Calu3 (cell line): ENCODE measurements at regions of chr3 and their contacts with region 1.

Region 1: GRCh38 chr3:155270485-155271342 is 22.8 kb downstream of the STRIT1 start:
- DNase-seq: peak; percentile 50
- H3K4me3 Mint-ChIP-seq: peak overlapping the region; percentile 14
- H3K27ac Mint-ChIP-seq: peak overlapping the region; percentile 85
- H3K4me1 Mint-ChIP-seq: peaks cover 28% of the 10 kb centered on the region
- H3K27me3 Mint-ChIP-seq: no peaks in the 10 kb centered on the region
- CTCF ChIP-seq: no peak

Region 2: GRCh38 chr3:154971771-154972326 is 298.9 kb before region 1 on chr3:
- CTCF ChIA-PET with region 1: no interaction called
- intact Hi-C with region 1: loop called (anchors 5 kb)
- DNase-seq: no peak
- H3K4me3 Mint-ChIP-seq: no peak overlapping the region
- H3K27ac Mint-ChIP-seq: no peak overlapping the region
- H3K4me1 Mint-ChIP-seq: peaks cover 12% of the 10 kb centered on the region
- H3K27me3 Mint-ChIP-seq: no peaks in the 10 kb centered on the region
- CTCF ChIP-seq: no peak

Region 3: DNA sequence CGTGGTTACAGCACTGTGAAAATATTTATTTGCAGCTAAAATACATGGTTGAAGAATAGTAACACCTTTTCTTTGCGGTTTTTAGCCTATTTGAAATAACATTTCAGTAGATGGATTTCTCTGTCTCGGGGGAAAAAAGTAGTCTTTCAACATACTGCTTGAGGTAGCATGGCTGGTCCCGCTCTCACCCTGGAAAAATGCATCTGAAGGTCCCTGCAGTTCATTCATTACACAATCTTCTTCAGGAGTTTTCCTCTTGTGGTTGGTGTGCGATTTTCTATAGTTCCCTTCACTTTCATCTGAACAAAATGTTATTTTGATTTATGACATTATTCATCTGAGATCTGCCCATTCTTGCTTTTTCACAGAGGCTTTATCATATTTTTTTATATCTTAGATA is 53.1 kb before region 1 on chr3:
- CTCF ChIA-PET with region 1: interaction called, 11 read pairs
- intact Hi-C with region 1: no loop called
- DNase-seq: no peak
- H3K4me3 Mint-ChIP-seq: no peak overlapping the region
- H3K27ac Mint-ChIP-seq: no peak overlapping the region
- H3K4me1 Mint-ChIP-seq: no peaks in the 10 kb centered on the region
- H3K27me3 Mint-ChIP-seq: no peaks in the 10 kb centered on the region
- CTCF ChIP-seq: no peak

Region 4: DNA sequence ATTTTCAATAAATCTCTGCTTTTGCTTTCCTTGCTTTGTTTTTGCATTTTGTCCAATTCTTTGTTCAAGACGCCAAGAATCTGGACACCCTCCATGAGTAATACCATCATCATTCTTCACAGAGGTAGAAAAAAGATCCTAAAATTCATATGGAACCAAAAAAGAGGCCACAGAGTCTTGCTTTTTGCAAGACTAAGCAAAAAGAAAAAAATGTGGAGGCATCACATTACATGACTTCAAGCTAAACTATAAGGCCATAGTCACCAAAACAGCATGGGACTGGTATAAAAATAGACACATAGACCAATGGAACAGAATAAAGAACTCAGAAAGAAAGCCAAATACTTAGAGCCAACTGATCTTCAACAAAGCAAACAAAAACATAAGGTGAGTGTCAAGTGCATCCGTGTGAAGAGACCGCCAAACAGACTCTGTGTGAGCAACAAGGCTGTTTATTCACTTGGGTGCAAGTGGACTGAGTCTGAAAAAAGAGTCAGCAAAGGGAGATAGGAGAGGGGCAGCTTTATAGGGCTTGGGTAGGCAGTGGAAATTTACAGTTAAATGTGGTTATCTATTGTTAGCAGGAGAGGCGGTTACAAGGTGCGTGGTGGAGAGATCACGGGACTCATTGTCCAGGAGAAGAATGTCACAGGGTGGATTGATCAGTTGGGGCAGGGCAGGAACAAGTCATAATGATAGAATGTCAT is 11.8 kb after region 1 on chr3:
- CTCF ChIA-PET with region 1: no interaction called
- intact Hi-C with region 1: loop called (anchors 1 kb)
- DNase-seq: peak; percentile 67
- H3K4me3 Mint-ChIP-seq: no peak overlapping the region
- H3K27ac Mint-ChIP-seq: no peak overlapping the region
- H3K4me1 Mint-ChIP-seq: no peaks in the 10 kb centered on the region
- H3K27me3 Mint-ChIP-seq: no peaks in the 10 kb centered on the region
- CTCF ChIP-seq: no peak

Region 5: GRCh38 chr3:155313300-155313699 is 42.6 kb after region 1 on chr3:
- CTCF ChIA-PET with region 1: no interaction called
- intact Hi-C with region 1: loop called (anchors 1 kb)
- DNase-seq: no peak
- H3K4me3 Mint-ChIP-seq: no peak overlapping the region
- H3K27ac Mint-ChIP-seq: peak overlapping the region; percentile 97
- H3K4me1 Mint-ChIP-seq: peaks cover 31% of the 10 kb centered on the region
- H3K27me3 Mint-ChIP-seq: no peaks in the 10 kb centered on the region
- CTCF ChIP-seq: no peak